ENCODE measurements at regions of chr4 and their contacts with region 1.

Region 1: GRCh38 chr4:177047070-177047850 is 254.5 kb upstream of the VEGFC start:
- DNase-seq: no peak

Region 2: GRCh38 chr4:176377780-176378179 is 669.5 kb before region 1 on chr4:
- intact Hi-C with region 1: loop called (anchors 2 kb)
- DNase-seq: no peak

Region 3: GRCh38 chr4:176569301-176569700 is 478.0 kb before region 1 on chr4:
- intact Hi-C with region 1: loop called (anchors 5 kb)
- DNase-seq: no peak

Region 4: DNA sequence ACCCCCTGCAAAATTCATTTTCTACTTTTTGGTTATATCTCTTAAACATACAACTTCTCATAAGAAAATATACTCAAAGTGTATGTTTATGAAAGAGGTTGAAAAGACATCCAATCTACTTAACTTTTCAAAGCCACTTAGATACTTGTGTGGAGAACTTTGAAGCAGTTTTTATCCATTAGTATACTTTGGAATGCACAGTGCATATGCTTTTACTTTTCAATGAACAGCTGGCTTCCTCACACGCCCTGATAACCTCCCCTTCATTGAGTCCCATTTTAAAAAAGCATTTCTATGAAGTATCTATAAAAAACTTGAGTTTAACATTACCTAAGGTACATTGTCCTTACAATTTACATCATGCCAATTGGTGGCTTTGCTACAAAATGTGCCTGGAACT is 328.4 kb before region 1 on chr4:
- intact Hi-C with region 1: loop called (anchors 10 kb)
- DNase-seq: no peak

Region 5: DNA sequence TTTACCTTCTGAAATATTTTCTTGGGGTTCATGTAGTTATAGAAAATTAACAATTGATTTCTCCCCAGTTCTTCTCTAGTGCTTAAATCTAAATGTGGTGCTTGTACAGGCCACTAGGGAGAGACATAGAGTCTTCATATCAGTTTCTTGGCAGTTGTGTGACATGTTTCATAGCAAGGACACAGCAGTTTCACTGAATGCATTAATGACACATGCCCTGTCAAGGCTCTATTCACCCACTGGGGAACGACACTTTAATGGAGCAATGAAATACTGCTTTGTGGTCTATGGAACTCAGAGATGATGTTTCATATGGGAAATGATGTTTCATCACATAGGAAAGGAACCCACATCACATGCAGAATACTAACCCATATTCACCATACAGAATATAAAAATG is 257.3 kb before region 1 on chr4:
- intact Hi-C with region 1: loop called (anchors 2 kb)
- DNase-seq: no peak

Region 6: GRCh38 chr4:177204126-177204525 is 156.9 kb after region 1 on chr4:
- intact Hi-C with region 1: no loop called
- DNase-seq: no peak

Region 7: DNA sequence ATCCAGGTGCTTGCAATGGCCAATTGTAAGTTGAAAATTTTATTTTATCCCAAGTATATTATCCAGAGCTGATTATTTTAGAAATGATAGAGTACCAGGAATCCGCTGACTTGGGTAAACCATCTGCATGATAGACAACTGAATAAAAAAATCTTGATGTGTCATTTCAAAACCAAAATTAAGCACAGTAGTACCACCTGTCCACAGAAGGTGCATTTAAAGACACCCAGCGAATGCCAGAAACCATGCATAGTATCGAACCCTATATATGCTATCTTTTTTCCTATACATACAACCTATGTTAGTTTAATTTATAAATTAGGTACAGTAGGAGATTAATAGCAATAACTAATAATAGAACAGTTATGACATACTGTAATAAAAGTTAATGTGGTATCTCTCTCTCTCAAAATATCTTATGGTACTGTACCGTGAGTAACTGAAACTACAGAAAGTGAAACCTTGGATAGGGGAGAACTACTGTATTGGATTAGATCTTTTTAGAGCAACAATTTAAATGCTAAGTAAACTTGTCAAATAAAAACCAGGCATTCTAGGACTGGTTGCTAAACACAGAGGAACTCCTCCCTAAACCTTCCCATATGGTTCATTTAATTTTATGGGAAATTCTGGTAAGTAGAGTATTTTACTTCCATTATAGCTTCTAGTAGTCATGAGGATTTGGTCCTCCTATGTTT is 268.7 kb after region 1 on chr4:
- intact Hi-C with region 1: no loop called
- DNase-seq: no peak

Region 8: DNA sequence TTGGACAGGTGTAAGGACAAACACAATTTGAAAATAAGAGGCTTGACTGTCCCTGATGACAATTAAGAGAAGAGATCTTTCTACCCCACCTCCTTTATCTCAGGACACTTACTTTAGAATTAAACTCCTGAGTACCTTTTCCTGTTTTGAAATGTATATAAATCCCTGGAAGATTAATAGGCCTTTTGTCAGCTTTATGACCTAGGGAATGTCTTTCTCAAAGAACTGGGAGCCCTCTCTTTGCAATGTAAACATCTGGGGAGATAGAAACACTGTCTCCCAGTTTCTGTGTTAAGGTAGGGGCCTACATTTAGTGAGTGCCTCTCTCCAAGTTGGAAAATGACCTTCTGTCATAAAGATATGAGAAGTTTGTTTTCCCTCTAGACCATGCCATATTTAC is 363.3 kb after region 1 on chr4:
- intact Hi-C with region 1: no loop called
- DNase-seq: no peak